Mammary epithelial cell (primary cell): ENCODE measurements at regions of chr1 and their contacts with region 1.

Region 1: GRCh38 chr1:211603191-211603701 is 24.3 kb upstream of the SLC30A1 start:
- DNase-seq: peak; percentile 84
- H3K4me3 ChIP-seq: no peak overlapping the region
- H3K27ac ChIP-seq: peak overlapping the region; percentile 54
- H3K4me1 ChIP-seq: peaks cover 23% of the 10 kb centered on the region
- H3K27me3 ChIP-seq: no peaks in the 10 kb centered on the region
- CTCF ChIP-seq: no peak

Region 2: GRCh38 chr1:211589782-211590721 is 13.2 kb before region 1 on chr1:
- CTCF ChIA-PET with region 1: no interaction called
- dilution Hi-C with region 1: no loop called
- in situ Hi-C with region 1: no loop called
- intact Hi-C with region 1: loop called (anchors 2 kb)
- DNase-seq: peak; percentile 26
- H3K4me3 ChIP-seq: no peak overlapping the region
- H3K27ac ChIP-seq: no peak overlapping the region
- H3K4me1 ChIP-seq: peaks cover 35% of the 10 kb centered on the region
- H3K27me3 ChIP-seq: no peaks in the 10 kb centered on the region
- CTCF ChIP-seq: no peak

Region 3: GRCh38 chr1:211613093-211613947 is 10.1 kb after region 1 on chr1:
- CTCF ChIA-PET with region 1: no interaction called
- dilution Hi-C with region 1: no loop called
- in situ Hi-C with region 1: no loop called
- intact Hi-C with region 1: loop called (anchors 1 kb)
- DNase-seq: peak; percentile 90
- H3K4me3 ChIP-seq: no peak overlapping the region
- H3K27ac ChIP-seq: no peak overlapping the region
- H3K4me1 ChIP-seq: peaks cover 14% of the 10 kb centered on the region
- H3K27me3 ChIP-seq: no peaks in the 10 kb centered on the region
- CTCF ChIP-seq: no peak